RWPE1 (cell line): ENCODE measurements at regions of chr9 and their contacts with region 1.

Region 1: GRCh38 chr9:93108291-93109041 is 12.4 kb downstream of the CARD19 start:
- DNase-seq: no peak
- H3K27ac ChIP-seq: peak overlapping the region; percentile 68
- CTCF ChIP-seq: no peak

Region 2: DNA sequence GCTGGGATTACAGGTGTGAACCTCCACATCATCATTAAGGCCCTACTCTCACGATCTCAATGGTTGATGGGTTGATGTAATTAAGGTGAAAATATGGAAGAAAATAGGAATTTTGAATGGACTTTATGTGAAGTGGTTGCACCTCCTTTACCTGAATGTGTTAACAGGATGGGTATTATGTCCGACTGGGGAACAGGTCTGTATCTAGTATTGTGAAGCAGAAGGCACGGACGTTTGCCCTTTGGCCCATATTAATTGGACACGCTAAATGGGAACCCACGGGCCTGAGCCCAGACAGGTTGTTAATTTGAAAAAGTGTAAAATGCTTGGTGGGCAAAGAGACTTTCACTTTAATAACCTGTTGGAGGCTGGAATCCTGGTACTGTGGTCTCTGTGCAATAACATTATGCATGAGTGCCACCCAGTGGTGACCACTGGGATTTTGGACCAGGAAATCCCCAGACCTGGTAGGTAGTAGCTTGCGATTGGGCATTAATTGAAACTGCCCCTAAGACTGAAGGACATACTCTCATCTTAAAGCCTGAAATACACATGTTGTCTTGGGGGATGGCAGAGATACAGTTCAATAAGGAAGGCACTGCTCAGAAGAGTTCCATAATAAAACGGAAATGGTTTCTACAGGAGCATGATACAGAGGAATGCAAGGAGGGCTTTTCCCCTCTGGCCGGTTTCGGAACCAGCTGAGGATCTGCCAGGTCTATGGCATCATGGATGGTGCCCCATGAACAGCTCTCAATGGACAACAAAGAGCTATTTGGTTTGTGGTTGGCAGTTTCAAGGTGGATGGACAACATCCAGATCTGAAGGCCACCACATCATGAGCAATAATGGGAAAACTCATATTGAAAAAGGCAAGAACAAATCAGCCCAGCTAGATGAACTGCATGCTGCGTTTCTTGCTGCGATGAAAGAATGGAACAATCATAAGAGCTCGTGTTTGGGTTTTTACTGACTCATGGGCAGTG is 317.6 kb before region 1 on chr9:
- CTCF ChIA-PET with region 1: interaction called, 13 read pairs
- POLR2A ChIA-PET with region 1: no interaction called
- DNase-seq: peak; percentile 92
- H3K27ac ChIP-seq: no peak overlapping the region
- CTCF ChIP-seq: peak; percentile 96

Region 3: GRCh38 chr9:93096131-93096802 is 12.2 kb before region 1 on chr9 and contains the start of gene CARD19:
- CTCF ChIA-PET with region 1: interaction called, 22 read pairs
- POLR2A ChIA-PET with region 1: interaction called, 3 read pairs
- DNase-seq: peak; percentile 69
- H3K27ac ChIP-seq: peak within 1 kb of the TSS; percentile 94
- CTCF ChIP-seq: no peak

Region 4: DNA sequence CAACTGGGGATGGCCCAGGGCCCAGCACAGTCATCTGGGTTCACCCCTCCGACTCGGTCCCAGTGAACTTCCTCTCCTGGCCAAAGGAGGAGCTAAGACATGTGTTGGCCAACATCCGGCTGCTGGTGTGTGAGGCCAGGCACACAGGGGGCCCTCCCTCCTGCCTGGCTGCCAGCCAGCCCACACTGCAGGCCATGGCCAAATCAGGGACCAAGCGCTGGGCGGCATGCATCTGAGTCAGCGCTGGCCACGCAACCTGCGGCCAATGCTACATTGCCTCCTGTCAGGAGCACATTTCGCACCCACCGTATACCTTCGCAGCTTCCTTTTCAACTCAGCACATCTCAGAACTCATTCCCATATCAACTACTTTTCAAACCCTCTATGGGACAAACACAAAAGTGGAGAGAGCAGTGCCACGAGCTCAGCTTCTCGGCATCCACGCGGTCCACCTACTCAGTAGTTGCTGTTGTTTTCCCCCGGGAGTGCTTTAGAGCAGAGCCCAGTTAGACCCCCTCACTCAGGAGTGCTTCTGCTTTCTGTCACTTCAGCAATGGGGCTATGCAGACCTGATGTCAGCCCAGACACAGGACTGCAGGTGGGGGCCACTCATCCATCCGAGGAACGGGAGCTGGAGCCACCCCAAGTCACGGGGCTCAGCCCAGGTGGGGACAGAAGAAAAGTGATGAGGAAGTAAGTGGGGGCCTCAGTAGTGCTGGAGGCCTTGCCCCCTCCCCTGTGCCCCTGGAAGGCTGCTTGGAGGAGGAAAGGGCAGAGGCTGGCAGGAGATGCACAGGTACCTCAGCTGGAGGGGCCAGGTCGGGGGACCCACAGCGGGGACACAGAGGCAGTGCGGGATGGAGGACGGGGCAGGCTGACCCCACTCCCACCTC is 11.7 kb after region 1 on chr9:
- CTCF ChIA-PET with region 1: interaction called, 18 read pairs
- POLR2A ChIA-PET with region 1: interaction called, 3 read pairs
- DNase-seq: peak; percentile 98
- H3K27ac ChIP-seq: peak overlapping the region; percentile 87
- CTCF ChIP-seq: no peak; the same call in 1 of the 2 replicates

Region 5: DNA sequence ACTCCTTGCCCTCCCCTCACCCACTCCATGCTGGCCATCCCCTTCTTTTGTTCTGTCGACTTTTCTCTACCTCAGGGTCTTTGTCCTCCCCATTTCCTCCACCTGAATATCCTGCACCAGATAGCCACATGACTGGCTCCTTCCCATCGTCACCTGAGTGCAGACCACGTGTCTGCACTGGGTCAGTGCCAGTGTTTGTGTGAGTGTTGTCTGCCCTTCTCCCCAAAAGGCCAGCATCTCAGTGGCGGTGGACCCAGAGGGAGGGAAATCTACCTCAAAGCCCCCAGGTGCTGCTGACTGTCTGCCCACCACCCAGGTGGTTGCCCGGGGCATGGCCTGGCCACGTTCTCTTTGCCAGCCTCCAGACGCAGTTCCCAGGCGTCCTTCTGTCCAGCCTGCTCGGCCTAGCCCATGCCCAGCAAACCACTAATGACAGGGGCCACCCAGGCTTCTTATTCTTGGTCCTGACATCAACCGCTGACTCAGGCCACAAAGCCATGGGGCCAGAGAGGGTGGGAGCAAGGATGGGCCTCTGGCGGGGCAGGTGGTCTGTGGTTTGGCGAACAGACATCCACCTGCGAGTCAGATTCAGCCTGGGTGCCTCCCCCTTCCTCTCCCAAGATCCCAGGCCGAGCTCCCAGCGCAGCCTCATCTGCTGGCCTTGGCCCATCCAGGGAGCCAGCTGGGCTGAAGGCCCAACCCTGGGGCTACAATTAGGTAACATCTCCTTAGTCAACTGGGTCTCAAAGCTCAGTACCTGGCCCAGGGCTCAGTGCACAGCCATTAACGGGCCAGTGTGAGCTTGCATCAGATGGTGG is 31.1 kb after region 1 on chr9:
- CTCF ChIA-PET with region 1: interaction called, 21 read pairs
- POLR2A ChIA-PET with region 1: no interaction called
- DNase-seq: peak; percentile 44
- H3K27ac ChIP-seq: peak overlapping the region; percentile 85
- CTCF ChIP-seq: no peak

Region 6: DNA sequence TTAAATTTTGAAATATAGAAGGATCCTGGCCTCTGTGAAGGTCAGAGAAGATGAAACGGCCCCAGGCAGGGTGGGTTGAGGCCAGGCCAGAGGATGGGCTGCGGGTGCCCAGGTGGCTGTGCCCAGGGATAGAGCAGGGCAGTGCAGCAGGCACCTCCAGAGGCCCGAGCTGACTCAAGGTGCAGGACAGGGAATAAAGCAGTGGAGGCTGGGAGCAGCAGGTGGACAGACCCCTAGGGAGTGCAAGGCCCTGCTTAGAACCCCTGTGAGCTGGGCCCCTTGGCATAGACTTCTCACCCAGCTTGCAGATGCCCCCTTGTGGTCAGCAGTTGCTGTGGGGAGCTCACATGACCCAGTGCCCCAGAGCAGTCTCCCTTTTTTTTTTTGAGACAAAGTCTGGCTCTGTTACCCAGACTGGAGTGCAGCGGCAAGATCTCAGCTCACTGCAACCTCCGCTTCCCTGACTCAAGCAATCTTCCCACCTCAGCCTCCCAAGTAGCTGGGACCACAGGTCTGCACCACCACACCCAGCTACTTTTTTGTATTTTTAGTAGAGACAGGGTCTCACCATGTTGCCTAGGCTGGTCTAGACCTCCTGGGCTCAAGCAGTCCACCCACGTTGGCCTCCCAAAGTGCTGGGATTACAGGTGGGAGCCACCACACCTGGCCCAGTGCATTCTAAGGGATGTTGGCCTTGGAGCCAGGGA is 194.2 kb after region 1 on chr9:
- CTCF ChIA-PET with region 1: interaction called, 17 read pairs
- POLR2A ChIA-PET with region 1: interaction called, 3 read pairs
- DNase-seq: peak; percentile 70
- H3K27ac ChIP-seq: no peak overlapping the region
- CTCF ChIP-seq: peak; percentile 76

Region 7: DNA sequence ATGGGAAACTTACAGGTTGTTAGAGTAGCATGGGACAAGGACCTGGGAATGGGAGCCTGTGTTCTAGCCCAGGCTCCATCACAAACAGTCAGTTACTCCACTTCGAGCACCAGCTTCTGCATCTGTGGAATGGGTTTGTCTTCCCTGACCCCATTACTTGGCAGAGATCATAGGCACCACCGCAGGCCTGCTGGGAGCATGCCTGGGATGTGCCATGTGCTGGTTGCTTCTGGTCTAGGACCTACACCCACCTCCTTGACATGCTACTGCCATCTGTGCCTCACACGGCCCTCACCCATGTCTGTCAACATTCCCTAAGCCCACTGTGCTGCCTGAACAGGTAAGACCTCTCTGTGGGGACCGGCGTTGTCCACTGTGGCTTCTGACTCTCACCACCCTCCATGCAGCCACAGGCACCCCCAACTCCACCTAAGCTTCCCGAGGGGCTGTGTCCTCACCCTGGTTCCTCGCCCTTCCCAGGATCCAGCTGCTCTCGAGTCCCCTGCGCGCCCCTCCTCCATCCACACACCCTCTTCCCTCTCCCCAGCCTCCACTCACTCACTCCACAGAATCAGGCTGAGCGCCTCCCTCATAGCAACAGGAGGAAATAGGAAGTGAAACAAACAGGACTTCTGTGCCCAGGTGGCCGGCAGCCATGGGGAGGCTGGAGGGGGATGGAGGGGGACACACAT is 257.1 kb after region 1 on chr9:
- CTCF ChIA-PET with region 1: no interaction called
- POLR2A ChIA-PET with region 1: no interaction called
- DNase-seq: no peak
- H3K27ac ChIP-seq: no peak overlapping the region
- CTCF ChIP-seq: no peak